Activated CD4-positive, alpha-beta T cell treated with anti-CD3 and anti-CD28 coated beads for 36 hours (primary cell): ENCODE measurements at regions of chr14 and their contacts with region 1.

Region 1: DNA sequence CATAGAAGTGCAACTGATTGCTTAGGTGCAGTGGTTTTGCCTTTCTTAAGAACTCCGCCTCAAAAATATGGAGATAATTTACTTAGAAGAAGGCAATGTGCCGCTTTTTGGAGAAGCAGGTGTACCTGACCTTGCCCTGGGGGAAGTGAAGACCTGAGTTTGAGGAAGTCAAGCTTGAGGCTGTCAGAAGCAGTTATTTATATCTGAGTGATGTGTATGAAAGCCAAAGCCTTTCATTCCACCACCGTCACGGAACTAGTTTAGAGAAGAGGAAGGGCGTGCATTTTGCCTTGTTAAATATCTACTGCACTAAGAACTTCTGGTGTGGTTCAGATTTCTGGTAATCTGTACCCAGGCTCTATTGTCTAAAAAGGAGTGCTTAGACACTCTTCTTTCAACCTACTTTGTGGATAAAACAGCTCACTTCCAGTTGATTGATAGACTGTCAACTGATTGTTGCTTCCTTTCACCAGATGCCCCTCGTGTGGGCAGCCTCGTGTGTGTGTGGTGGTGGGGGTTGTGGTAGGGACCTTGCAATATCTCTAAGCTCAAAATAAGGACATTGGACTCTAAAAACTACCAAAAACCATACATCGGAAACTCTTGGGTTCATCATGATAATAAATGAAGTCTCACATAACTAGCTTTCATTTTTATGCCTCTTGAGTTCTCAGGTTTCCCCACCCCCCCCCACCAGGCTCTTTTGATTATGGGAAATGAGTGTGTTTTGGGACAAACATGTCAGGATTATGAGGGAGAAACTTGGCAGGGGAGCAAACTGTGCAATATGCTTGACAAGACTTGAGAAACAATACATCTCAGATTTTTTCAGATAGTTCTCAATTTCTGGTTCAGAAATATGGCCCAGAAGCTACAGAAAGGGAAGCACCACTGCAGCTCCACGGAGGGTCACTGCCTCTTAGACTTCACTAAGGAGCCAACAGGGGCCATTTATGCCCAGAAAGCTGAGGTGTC is 78.6 kb downstream of the ARF6 start:
- DNase-seq: peak; percentile 77
- ATAC-seq: peak; percentile 66
- H3K4me3 Mint-ChIP-seq: peak overlapping the region; percentile 75
- H3K27ac Mint-ChIP-seq: peak overlapping the region; percentile 98
- H3K4me1 Mint-ChIP-seq: peaks cover 67% of the 10 kb centered on the region
- H3K27me3 Mint-ChIP-seq: no peaks in the 10 kb centered on the region

Region 2: DNA sequence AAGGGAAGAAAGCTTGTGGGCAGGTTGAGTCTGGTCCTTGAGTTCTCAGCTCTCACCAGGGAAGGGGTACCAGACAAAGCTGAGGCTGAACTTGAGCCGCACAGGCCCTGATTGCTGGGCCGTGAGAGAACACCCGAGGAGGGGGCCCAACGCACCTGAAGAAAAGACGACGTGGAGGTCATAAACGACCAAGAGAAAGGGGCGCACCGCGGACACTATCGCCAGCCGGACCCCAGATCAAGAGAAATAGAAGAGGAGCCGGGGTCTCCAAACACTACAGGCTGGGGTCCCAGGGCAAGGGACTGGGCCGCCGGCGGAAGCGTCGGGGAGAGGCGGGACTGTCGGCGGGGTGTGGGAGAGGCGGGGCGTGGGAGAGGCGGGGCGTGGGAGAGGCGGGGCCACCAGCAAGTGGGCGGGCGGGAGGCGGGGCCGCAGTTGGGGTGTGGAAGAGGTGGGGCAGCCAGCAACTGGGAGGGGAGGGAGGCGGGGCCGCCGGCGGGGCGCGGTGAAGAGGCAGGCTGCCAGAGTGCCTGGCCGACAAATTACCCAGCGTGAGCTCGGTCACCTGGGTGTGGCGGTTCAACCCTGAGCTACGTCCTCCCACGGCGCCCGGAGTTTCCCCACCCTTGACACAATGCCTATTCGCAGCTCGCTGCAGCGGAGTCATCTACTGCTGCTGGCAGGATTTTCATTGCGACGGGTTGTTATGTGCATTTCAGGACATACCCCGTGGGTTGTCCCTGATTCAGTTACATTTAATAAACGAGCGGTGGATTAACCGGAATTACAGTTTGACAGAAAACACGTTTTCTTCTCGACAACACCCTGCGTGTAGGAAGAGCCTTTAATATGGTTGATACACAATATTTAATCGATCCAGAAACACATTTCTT is 103.4 kb before region 1 on chr14:
- CTCF ChIA-PET with region 1: interaction called, 16 read pairs
- POLR2A ChIA-PET with region 1: interaction called, 4 read pairs
- intact Hi-C with region 1: loop called (anchors 1 to 2 kb)
- DNase-seq: peak; percentile 100
- ATAC-seq: peak; percentile 87
- H3K4me3 Mint-ChIP-seq: peak overlapping the region; percentile 98
- H3K27ac Mint-ChIP-seq: peak overlapping the region; percentile 96
- H3K4me1 Mint-ChIP-seq: peaks cover 22% of the 10 kb centered on the region
- H3K27me3 Mint-ChIP-seq: no peaks in the 10 kb centered on the region

Region 3: GRCh38 chr14:49946320-49947141 is 24.9 kb before region 1 on chr14:
- CTCF ChIA-PET with region 1: interaction called, 7 read pairs
- POLR2A ChIA-PET with region 1: interaction called, 4 read pairs
- intact Hi-C with region 1: loop called (anchors 1 to 2 kb)
- DNase-seq: peak; percentile 62
- ATAC-seq: peak; percentile 53
- H3K4me3 Mint-ChIP-seq: peak overlapping the region; percentile 31
- H3K27ac Mint-ChIP-seq: peak overlapping the region; percentile 78
- H3K4me1 Mint-ChIP-seq: peaks cover 71% of the 10 kb centered on the region
- H3K27me3 Mint-ChIP-seq: no peaks in the 10 kb centered on the region

Region 4: DNA sequence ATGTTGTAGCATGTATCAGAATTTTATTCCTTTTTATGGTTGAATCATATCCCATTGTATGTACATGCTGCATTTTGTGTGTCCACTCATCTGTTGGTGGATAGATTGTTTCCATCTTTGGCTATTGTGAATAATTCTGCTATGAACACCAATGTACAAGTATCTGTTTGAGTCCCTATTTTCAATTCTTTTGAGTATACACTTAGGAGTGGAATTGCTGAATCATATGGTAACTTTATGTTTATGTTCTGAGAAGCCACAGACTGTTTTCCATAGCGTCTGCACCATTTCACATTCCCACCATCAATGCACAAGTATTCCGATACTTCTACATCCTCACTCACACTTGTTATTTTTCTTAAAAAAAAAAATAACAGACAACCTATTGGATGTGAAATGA is 13.0 kb after region 1 on chr14:
- CTCF ChIA-PET with region 1: interaction called, 7 read pairs
- POLR2A ChIA-PET with region 1: interaction called, 9 read pairs
- intact Hi-C with region 1: loop called (anchors 1 kb)
- DNase-seq: peak; percentile 50
- ATAC-seq: peak; percentile 79
- H3K4me3 Mint-ChIP-seq: peak overlapping the region; percentile 16
- H3K27ac Mint-ChIP-seq: peak overlapping the region; percentile 85
- H3K4me1 Mint-ChIP-seq: peaks cover 70% of the 10 kb centered on the region
- H3K27me3 Mint-ChIP-seq: no peaks in the 10 kb centered on the region